CD8-positive, alpha-beta T cell (primary cell): ENCODE measurements at regions of chr11 and their contacts with region 1.

Region 1: GRCh38 chr11:35214792-35215193 is 75.8 kb downstream of the CD44 start:
- DNase-seq: peak in 2 of 9 experiments; percentile 25 to 51
- ATAC-seq: peak; percentile 33
- H3K4me3 ChIP-seq: no peak overlapping the region
- H3K4me3 Mint-ChIP-seq: no peak overlapping the region
- H3K27ac ChIP-seq: peak overlapping the region in 1 of 2 experiments; percentile 50
- H3K27ac Mint-ChIP-seq: peak overlapping the region; percentile 92
- H3K4me1 ChIP-seq: peaks cover 43% of the 10 kb centered on the region
- H3K4me1 Mint-ChIP-seq: peaks cover 74% of the 10 kb centered on the region
- H3K27me3 ChIP-seq: no peaks in the 10 kb centered on the region
- H3K27me3 Mint-ChIP-seq: no peaks in the 10 kb centered on the region
- CTCF ChIP-seq: no peak

Region 2: GRCh38 chr11:35182317-35182939 is 32.4 kb before region 1 on chr11:
- CTCF ChIA-PET with region 1: no interaction called
- POLR2A ChIA-PET with region 1: interaction called, 3 read pairs
- intact Hi-C with region 1: loop called in 1 of 2 experiments (anchors 5 kb)
- DNase-seq: peak in 1 of 9 experiments; percentile 24
- ATAC-seq: no peak
- H3K4me3 ChIP-seq: no peak overlapping the region
- H3K4me3 Mint-ChIP-seq: peak overlapping the region; percentile 24
- H3K27ac ChIP-seq: peak overlapping the region in 1 of 2 experiments; percentile 9
- H3K27ac Mint-ChIP-seq: peak overlapping the region; percentile 89
- H3K4me1 ChIP-seq: peaks cover 80% of the 10 kb centered on the region
- H3K4me1 Mint-ChIP-seq: peaks cover 86% of the 10 kb centered on the region
- H3K27me3 ChIP-seq: no peaks in the 10 kb centered on the region
- H3K27me3 Mint-ChIP-seq: no peaks in the 10 kb centered on the region
- CTCF ChIP-seq: no peak

Region 3: GRCh38 chr11:35237860-35238715 is 23.3 kb after region 1 on chr11:
- CTCF ChIA-PET with region 1: interaction called, 4 read pairs
- POLR2A ChIA-PET with region 1: interaction called, 3 read pairs
- intact Hi-C with region 1: loop called in 1 of 2 experiments (anchors 2 kb)
- DNase-seq: peak in 7 of 9 experiments; percentile 29 to 84 (median 62)
- ATAC-seq: no peak
- H3K4me3 ChIP-seq: no peak overlapping the region
- H3K4me3 Mint-ChIP-seq: no peak overlapping the region
- H3K27ac ChIP-seq: no peak overlapping the region
- H3K27ac Mint-ChIP-seq: no peak overlapping the region
- H3K4me1 ChIP-seq: peaks cover 46% of the 10 kb centered on the region
- H3K4me1 Mint-ChIP-seq: peaks cover 87% of the 10 kb centered on the region
- H3K27me3 ChIP-seq: no peaks in the 10 kb centered on the region
- H3K27me3 Mint-ChIP-seq: no peaks in the 10 kb centered on the region
- CTCF ChIP-seq: peak; percentile 65

Region 4: GRCh38 chr11:35257281-35257680 is 42.5 kb after region 1 on chr11:
- CTCF ChIA-PET with region 1: interaction called, 3 read pairs
- POLR2A ChIA-PET with region 1: no interaction called
- intact Hi-C with region 1: loop called in 1 of 2 experiments (anchors 5 kb)
- DNase-seq: peak in 2 of 9 experiments; percentile 52 to 72
- ATAC-seq: peak; percentile 98
- H3K4me3 ChIP-seq: no peak overlapping the region
- H3K4me3 Mint-ChIP-seq: peak overlapping the region; percentile 56
- H3K27ac ChIP-seq: peak overlapping the region in 1 of 2 experiments; percentile 72
- H3K27ac Mint-ChIP-seq: peak overlapping the region; percentile 96
- H3K4me1 ChIP-seq: peaks cover 26% of the 10 kb centered on the region
- H3K4me1 Mint-ChIP-seq: peaks cover 40% of the 10 kb centered on the region
- H3K27me3 ChIP-seq: no peaks in the 10 kb centered on the region
- H3K27me3 Mint-ChIP-seq: no peaks in the 10 kb centered on the region
- CTCF ChIP-seq: no peak

Region 5: GRCh38 chr11:35478471-35479091 is 263.8 kb after region 1 on chr11:
- CTCF ChIA-PET with region 1: no interaction called
- POLR2A ChIA-PET with region 1: no interaction called
- intact Hi-C with region 1: no loop called
- DNase-seq: no peak
- ATAC-seq: no peak
- H3K4me3 ChIP-seq: no peak overlapping the region
- H3K4me3 Mint-ChIP-seq: no peak overlapping the region
- H3K27ac ChIP-seq: no peak overlapping the region
- H3K27ac Mint-ChIP-seq: no peak overlapping the region
- H3K4me1 ChIP-seq: no peaks in the 10 kb centered on the region
- H3K4me1 Mint-ChIP-seq: no peaks in the 10 kb centered on the region
- H3K27me3 ChIP-seq: no peaks in the 10 kb centered on the region
- H3K27me3 Mint-ChIP-seq: peaks cover 50% of the 10 kb centered on the region
- CTCF ChIP-seq: no peak